Right ventricle myocardium inferior (tissue), 1 donor: ENCODE measurements at regions of chr4 and their contacts with region 1.

Region 1: DNA sequence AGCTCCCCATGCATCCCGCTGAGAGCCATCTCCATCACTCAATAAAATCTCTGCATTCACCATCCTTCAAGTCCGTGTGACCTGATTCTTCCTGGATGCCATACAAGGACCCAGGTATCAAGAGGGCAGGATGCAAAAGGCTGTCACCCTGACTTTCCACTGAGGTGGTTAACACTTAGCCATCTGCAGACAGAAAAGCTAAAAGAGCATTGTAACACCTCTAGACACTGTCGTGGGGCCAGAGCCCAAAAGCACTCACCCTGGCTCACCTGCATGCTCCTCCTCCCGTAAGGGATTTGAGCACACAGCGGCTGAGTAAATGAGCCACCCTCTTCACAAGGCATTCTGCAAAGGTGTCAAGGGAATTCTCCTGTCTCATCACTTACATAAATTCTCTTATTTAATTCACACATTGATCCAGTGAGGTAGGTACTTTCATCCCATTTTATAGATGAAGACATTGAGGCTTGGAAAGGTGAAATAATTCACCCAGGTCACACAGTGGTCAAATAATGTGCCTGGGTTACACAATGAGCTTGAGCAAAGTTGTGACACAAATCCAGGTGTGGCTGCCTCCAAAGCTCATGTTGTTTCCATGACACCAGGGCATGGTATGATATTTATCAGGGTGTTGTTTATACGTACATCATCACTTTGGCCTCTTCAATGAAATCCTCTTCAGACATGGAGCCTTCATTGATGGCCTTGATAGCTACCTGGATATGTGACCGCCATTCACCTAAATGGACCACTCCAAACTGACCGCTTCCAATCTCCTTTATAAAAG is 48.0 kb downstream of the TXK start:
- DNase-seq: no peak
- ATAC-seq: no peak

Region 2: GRCh38 chr4:47926639-47927258 is 159.3 kb before region 1 on chr4:
- intact Hi-C with region 1: loop called (anchors 2 kb)
- DNase-seq: peak; percentile 47
- ATAC-seq: peak; percentile 64

Region 3: GRCh38 chr4:48005781-48006180 is 80.2 kb before region 1 on chr4:
- intact Hi-C with region 1: loop called (anchors 2 kb)
- DNase-seq: no peak
- ATAC-seq: no peak